ENCODE measurements at regions of chr1 and their contacts with region 1.

Region 1: GRCh38 chr1:44747878-44748277 is 8.2 kb downstream of the KIF2C start:
- DNase-seq: no peak
- H3K4me3 ChIP-seq: no peak overlapping the region
- H3K27ac ChIP-seq: no peak overlapping the region
- H3K4me1 ChIP-seq: no peaks in the 10 kb centered on the region
- H3K27me3 ChIP-seq: no peaks in the 10 kb centered on the region
- CTCF ChIP-seq: no peak
- POLR2A ChIP-seq: no peak

Region 2: GRCh38 chr1:44664730-44665370 is 83.0 kb before region 1 on chr1:
- intact Hi-C with region 1: no loop called
- DNase-seq: no peak
- H3K4me3 ChIP-seq: no peak overlapping the region
- H3K27ac ChIP-seq: no peak overlapping the region
- H3K4me1 ChIP-seq: no peaks in the 10 kb centered on the region
- H3K27me3 ChIP-seq: no peaks in the 10 kb centered on the region
- CTCF ChIP-seq: no peak
- POLR2A ChIP-seq: no peak

Region 3: GRCh38 chr1:45943185-45943584 is 1195.3 kb after region 1 on chr1:
- intact Hi-C with region 1: loop called (anchors 5 kb)
- DNase-seq: no peak
- H3K4me3 ChIP-seq: no peak overlapping the region
- H3K27ac ChIP-seq: no peak overlapping the region
- H3K4me1 ChIP-seq: no peaks in the 10 kb centered on the region
- H3K27me3 ChIP-seq: no peaks in the 10 kb centered on the region
- CTCF ChIP-seq: no peak
- POLR2A ChIP-seq: no peak

Measured in breast epithelium (tissue), 4 donors.